ENCODE measurements at regions of chr12 and their contacts with region 1.

Region 1: DNA sequence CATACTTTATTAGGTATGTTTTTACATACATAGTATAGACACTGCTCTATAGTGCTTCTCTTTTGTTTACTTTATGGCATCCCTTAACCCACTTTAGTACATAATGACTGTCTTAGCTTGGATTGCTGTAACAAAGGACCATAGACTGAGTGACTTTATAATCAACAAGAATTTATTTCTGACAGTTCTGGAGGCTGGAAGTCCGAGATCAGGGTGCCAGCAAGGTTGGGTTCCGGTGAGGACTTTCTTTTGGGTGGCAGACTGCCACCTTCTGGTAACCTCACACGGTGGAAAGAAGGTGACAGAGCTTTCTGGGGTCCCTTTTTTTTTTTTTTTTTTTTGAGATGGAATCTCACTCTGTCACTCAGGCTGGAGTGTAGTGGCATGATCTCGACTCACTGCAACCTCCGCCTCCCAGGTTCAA is 48.7 kb upstream of the PPM1H start:
- DNase-seq: no peak
- ATAC-seq: no peak
- H3K4me3 ChIP-seq: no peak overlapping the region
- H3K27ac ChIP-seq: no peak overlapping the region
- H3K4me1 ChIP-seq: no peaks in the 10 kb centered on the region
- H3K27me3 ChIP-seq: no peaks in the 10 kb centered on the region
- CTCF ChIP-seq: peak in 7 of 12 donors; percentile 13 to 45 (median 20)
- POLR2A ChIP-seq: no peak

Region 2: DNA sequence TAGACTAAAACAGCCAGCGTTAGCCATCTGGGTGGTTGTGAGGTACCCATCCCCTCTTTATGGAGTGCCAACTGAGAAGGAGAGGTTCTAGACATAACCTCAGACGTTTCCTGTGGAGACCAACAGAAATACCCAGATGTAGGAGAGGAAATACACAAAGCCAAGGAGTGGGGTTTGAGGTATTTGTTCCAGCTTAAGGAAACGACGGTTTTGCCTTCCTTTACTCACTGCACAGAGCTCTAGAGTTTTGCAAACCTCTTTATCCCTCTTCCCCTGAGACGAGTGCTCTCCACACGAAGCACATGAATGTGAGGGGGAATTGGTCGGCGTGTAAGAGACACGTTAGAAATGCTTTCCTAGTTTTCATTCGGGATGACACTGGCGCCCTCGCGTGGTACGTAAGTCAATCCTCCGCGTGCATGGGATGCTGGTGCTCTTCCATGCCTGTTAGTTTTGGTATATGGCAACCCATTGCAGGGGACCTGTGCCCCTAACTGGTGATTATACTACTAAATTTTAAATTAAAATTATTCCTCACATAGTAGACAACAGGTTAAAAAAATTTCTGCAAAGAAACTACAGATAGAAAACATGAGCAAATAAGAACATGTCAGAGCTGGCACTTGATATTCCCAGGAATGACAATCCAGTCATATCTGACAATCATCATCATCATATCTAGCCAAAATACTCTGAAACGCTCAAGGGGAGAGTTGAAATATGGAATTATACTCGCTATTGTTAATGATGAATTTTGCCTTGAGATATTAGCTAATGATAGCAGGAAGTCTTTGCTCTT is 170.4 kb before region 1 on chr12:
- intact Hi-C with region 1: loop called in 2 of 10 experiments (anchors 5 kb)
- DNase-seq: peak; percentile 52 to 76 (median 61)
- ATAC-seq: peak in 3 of 4 donors; percentile 70 to 83 (median 76)
- H3K4me3 ChIP-seq: peak overlapping the region in 6 of 12 donors; percentile 3 to 40 (median 22)
- H3K27ac ChIP-seq: no peak overlapping the region
- H3K4me1 ChIP-seq: peaks cover 0 to 15% (median 6%) of the 10 kb centered on the region in 12 donors
- H3K27me3 ChIP-seq: no peaks in the 10 kb centered on the region
- CTCF ChIP-seq: peak; percentile 51 to 85 (median 72)
- POLR2A ChIP-seq: no peak

Region 3: DNA sequence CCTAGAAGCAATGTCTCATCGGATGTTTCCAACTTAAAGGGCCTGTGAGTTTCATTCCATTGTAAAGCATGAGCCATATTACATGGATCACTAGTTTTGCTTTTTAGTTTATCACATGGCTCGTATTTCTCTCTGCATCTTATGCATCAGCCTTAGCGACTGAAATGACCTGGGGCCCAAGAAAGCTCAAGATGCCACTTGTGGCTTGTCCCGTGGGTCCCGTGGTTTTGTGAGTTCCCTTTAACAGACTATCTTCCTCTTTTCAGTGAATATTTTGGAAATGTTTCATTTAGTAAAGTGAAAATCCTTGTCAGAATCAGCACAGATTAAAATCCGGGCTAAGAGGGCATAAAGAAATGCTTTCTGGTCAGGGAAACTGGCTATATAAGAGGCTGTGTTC is 37.5 kb after region 1 on chr12:
- intact Hi-C with region 1: no loop called
- DNase-seq: no peak
- ATAC-seq: no peak
- H3K4me3 ChIP-seq: no peak overlapping the region
- H3K27ac ChIP-seq: no peak overlapping the region
- H3K4me1 ChIP-seq: no peaks in the 10 kb centered on the region
- H3K27me3 ChIP-seq: no peaks in the 10 kb centered on the region
- CTCF ChIP-seq: no peak
- POLR2A ChIP-seq: no peak

Region 4: GRCh38 chr12:64293654-64294364 is 1310.2 kb after region 1 on chr12:
- intact Hi-C with region 1: no loop called
- DNase-seq: no peak
- ATAC-seq: peak in 1 of 4 donors; percentile 44
- H3K4me3 ChIP-seq: no peak overlapping the region
- H3K27ac ChIP-seq: no peak overlapping the region
- H3K4me1 ChIP-seq: no peaks in the 10 kb centered on the region
- H3K27me3 ChIP-seq: no peaks in the 10 kb centered on the region
- CTCF ChIP-seq: no peak
- POLR2A ChIP-seq: no peak

Measured in heart left ventricle (tissue), 16 donors.